ENCODE measurements at regions of chr7 and their contacts with region 1.

Region 1: GRCh38 chr7:143380255-143380645 is 895 bp upstream of the ZYX start:
- DNase-seq: peak; percentile 89
- H3K4me3 ChIP-seq: peak overlapping the region; percentile 59 to 94 (median 67)
- H3K27ac ChIP-seq: peak overlapping the region; percentile 98
- H3K4me1 ChIP-seq: peaks cover 47% of the 10 kb centered on the region
- H3K27me3 ChIP-seq: no peaks in the 10 kb centered on the region
- CTCF ChIP-seq: peak; percentile 85 to 89
- POLR2A ChIP-seq: peak; percentile 54

Region 2: GRCh38 chr7:143299840-143300239 is 80.4 kb before region 1 on chr7:
- CTCF ChIA-PET with region 1: interaction called, 10 read pairs
- POLR2A ChIA-PET with region 1: interaction called, 6 read pairs
- dilution Hi-C with region 1: no loop called
- intact Hi-C with region 1: no loop called
- DNase-seq: peak; percentile 29
- H3K4me3 ChIP-seq: no peak overlapping the region
- H3K27ac ChIP-seq: no peak overlapping the region
- H3K4me1 ChIP-seq: peaks cover 23% of the 10 kb centered on the region
- H3K27me3 ChIP-seq: no peaks in the 10 kb centered on the region
- CTCF ChIP-seq: peak; percentile 54 to 69
- POLR2A ChIP-seq: no peak

Region 3: DNA sequence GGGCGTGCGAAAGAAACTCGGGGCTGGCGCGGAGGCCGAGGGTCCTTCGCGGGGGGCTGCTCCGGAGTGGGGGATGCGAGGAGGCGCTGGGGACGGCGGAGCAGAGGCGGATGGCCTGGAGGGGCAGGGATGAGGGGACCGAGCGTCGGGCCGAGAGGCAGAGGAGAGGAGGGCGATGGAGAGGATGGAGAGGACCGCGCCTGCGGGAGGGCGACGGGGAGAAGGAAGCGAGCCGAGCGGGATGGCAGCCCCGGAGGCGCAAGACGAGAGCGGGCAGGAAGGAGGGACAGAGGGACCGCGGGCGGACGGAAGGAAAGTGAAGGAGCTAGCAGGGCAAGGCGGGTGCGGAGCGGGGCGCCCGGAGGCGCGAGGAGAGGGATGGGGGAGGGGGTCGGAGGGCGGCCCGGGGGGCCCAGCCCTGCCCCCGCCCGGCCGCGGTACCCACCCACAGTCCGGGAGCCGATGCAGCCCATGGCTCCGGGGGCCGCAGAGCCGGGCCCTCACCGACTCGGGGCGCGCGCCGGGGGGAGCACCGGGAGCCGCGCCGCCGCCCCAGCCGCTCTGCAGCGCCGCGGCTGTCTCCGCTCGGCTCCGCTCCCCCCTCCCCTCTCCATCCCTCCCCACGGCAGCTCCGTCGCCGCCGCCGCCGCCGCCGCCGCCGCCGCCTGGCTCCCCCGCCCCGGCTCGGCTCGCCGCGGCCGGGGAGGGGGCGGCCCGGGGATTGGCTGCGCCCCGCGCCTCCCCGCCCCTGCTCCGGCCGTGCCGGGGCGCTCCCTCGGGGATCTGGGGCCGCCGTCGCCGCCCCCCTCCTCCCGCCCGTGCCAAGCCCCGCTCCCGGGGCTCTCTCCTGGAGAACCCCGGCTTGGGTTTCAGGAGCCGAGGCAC is 17.9 kb before region 1 on chr7 and contains the start of gene FAM131B:
- CTCF ChIA-PET with region 1: interaction called, 12 read pairs
- POLR2A ChIA-PET with region 1: no interaction called
- dilution Hi-C with region 1: no loop called
- intact Hi-C with region 1: loop called (anchors 2 kb)
- DNase-seq: no peak
- H3K4me3 ChIP-seq: peak within 1 kb of the TSS; percentile 43 to 51 (median 45)
- H3K27ac ChIP-seq: no peak within 1 kb of the TSS
- H3K4me1 ChIP-seq: no peaks in the 10 kb centered on the region
- H3K27me3 ChIP-seq: peaks cover 26 to 42% of the 10 kb centered on the region in 2 experiments
- CTCF ChIP-seq: no peak
- POLR2A ChIP-seq: no peak
- total RNA-seq, gene FAM131B: 1.4 and 1.6 TPM in 2 replicates

Region 4: GRCh38 chr7:143416565-143417149 is 36.4 kb after region 1 on chr7:
- CTCF ChIA-PET with region 1: interaction called, 25 read pairs
- POLR2A ChIA-PET with region 1: interaction called, 3 read pairs
- dilution Hi-C with region 1: no loop called
- intact Hi-C with region 1: loop called (anchors 1 kb)
- DNase-seq: peak; percentile 56
- H3K4me3 ChIP-seq: no peak overlapping the region
- H3K27ac ChIP-seq: no peak overlapping the region
- H3K4me1 ChIP-seq: peaks cover 9% of the 10 kb centered on the region
- H3K27me3 ChIP-seq: no peaks in the 10 kb centered on the region
- CTCF ChIP-seq: peak; percentile 41 to 59
- POLR2A ChIP-seq: no peak

Region 5: GRCh38 chr7:143504937-143505297 is 124.7 kb after region 1 on chr7:
- CTCF ChIA-PET with region 1: interaction called, 13 read pairs
- POLR2A ChIA-PET with region 1: interaction called, 4 read pairs
- dilution Hi-C with region 1: loop called (anchors 25 kb)
- intact Hi-C with region 1: no loop called
- DNase-seq: peak; percentile 78
- H3K4me3 ChIP-seq: no peak overlapping the region
- H3K27ac ChIP-seq: no peak overlapping the region
- H3K4me1 ChIP-seq: peaks cover 19% of the 10 kb centered on the region
- H3K27me3 ChIP-seq: no peaks in the 10 kb centered on the region
- CTCF ChIP-seq: peak in 1 of 2 donors; percentile 15
- POLR2A ChIP-seq: no peak